Testis (tissue), 5 donors: ENCODE measurements at regions of chr5 and their contacts with region 1.

Region 1: DNA sequence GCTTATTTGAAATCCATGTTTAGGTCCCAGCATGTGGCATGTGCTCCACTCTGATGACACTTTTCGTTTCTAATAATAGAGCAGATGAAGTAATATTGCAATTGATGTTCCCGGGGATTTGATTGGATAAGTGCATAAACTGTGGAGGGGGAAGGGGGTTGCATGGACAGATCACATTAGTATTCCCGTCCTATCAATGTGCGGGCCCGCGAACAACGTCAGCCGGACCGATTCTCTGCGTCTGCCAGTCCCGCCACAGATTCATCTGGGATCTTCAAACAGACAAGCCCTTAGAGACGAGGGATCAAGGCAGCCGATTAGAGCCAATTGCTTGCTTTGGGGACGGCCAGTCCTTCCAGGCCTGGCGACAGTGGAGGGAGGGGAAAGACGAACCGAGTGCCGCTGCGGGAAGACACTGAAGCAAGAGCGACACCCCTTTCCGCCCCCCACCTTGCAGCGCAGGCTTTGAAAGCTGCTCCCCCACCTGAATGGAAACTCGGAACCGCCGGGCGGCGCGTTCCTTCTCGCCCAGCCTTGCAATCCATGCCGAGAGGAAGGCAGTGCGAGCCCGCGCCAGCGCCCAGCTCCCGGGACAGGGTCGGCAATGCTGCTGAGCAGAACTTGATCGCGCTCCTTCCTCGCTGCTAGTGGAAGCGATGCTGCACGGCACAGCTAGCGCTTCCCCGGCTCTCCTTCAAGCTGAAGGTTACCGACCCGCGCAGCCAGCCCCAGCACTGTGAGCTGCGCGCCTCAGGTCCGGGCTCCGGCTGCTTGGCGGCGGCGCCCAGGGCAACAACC is at the start of gene RGS7BP:
- DNase-seq: peak; percentile 61
- H3K4me3 ChIP-seq: peak within 1 kb of the TSS; percentile 58 to 76
- H3K27ac ChIP-seq: peak within 1 kb of the TSS; percentile 14 to 42
- H3K4me1 ChIP-seq: no peaks in the 10 kb centered on the region
- H3K27me3 ChIP-seq: no peaks in the 10 kb centered on the region
- CTCF ChIP-seq: no peak
- POLR2A ChIP-seq: no peak
- total RNA-seq, gene RGS7BP: 3.1 to 7.8 TPM

Region 2: GRCh38 chr5:64595031-64595855 is 89.3 kb after region 1 on chr5:
- intact Hi-C with region 1: loop called (anchors 10 kb)
- DNase-seq: peak; percentile 26
- H3K4me3 ChIP-seq: no peak overlapping the region
- H3K27ac ChIP-seq: peak overlapping the region; percentile 19 to 32
- H3K4me1 ChIP-seq: peaks cover 10% of the 10 kb centered on the region
- H3K27me3 ChIP-seq: no peaks in the 10 kb centered on the region
- CTCF ChIP-seq: peak; percentile 43 to 51 (median 50)
- POLR2A ChIP-seq: no peak

Region 3: GRCh38 chr5:64690417-64691151 is 184.6 kb after region 1 on chr5 and contains the start of gene SHISAL2B:
- intact Hi-C with region 1: no loop called
- DNase-seq: peak; percentile 25
- H3K4me3 ChIP-seq: peak within 1 kb of the TSS; percentile 26 to 59
- H3K27ac ChIP-seq: no peak within 1 kb of the TSS
- H3K4me1 ChIP-seq: peaks cover 4% of the 10 kb centered on the region
- H3K27me3 ChIP-seq: no peaks in the 10 kb centered on the region
- CTCF ChIP-seq: no peak
- POLR2A ChIP-seq: no peak
- total RNA-seq, gene SHISAL2B: 0.74 to 1.0 TPM

Region 4: DNA sequence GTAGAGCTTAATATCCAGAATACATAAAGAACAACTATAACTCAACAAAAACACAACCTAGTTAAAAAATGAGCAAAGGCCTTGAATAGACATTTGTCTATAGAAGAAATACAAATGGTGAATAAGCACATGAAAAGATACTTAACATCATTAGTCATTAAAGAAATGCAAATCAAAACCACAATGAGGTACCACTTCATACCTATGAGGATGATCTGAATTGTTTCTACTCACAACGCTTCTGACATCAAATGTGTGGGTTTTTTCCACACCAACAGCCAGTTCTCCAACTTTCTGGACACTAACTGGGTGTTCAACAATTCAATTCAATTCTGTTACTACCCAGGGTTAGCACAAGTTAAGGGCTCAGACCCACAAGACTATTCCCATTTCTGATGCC is 240.5 kb after region 1 on chr5:
- intact Hi-C with region 1: no loop called
- DNase-seq: no peak
- H3K4me3 ChIP-seq: no peak overlapping the region
- H3K27ac ChIP-seq: no peak overlapping the region
- H3K4me1 ChIP-seq: no peaks in the 10 kb centered on the region
- H3K27me3 ChIP-seq: no peaks in the 10 kb centered on the region
- CTCF ChIP-seq: no peak
- POLR2A ChIP-seq: no peak